ENCODE measurements at regions of chr11 and their contacts with region 1.

Region 1: DNA sequence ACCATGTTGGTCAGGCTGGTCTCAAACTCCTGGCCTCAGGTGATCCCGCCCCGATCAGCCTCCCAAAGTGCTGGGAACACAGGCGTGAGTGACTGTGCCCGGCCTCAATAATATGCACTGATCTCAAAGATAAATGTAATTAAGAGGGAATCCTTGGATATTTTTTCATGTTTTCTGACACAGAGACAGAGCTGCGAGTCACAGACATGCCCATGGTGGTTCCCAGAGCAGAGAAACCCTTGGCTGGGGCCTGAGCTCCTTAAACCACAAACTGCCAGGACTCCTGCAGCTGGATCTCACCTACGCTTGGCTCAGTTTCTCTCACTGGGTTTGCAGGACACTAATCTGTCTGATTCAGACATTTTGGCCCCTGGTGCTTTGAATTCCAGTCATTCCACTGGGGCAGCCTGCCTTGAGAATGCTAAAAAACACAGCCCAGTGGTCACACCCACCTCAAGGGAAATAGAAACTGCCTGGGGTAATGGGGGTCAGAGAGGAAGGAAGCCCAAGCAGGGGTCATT is 122.6 kb downstream of the CCDC81 start:
- DNase-seq: peak; percentile 81 to 96
- H3K4me3 ChIP-seq: no peak overlapping the region
- H3K27ac ChIP-seq: peak overlapping the region; percentile 91
- H3K4me1 ChIP-seq: peaks cover 55% of the 10 kb centered on the region
- H3K27me3 ChIP-seq: no peaks in the 10 kb centered on the region
- CTCF ChIP-seq: no peak

Region 2: DNA sequence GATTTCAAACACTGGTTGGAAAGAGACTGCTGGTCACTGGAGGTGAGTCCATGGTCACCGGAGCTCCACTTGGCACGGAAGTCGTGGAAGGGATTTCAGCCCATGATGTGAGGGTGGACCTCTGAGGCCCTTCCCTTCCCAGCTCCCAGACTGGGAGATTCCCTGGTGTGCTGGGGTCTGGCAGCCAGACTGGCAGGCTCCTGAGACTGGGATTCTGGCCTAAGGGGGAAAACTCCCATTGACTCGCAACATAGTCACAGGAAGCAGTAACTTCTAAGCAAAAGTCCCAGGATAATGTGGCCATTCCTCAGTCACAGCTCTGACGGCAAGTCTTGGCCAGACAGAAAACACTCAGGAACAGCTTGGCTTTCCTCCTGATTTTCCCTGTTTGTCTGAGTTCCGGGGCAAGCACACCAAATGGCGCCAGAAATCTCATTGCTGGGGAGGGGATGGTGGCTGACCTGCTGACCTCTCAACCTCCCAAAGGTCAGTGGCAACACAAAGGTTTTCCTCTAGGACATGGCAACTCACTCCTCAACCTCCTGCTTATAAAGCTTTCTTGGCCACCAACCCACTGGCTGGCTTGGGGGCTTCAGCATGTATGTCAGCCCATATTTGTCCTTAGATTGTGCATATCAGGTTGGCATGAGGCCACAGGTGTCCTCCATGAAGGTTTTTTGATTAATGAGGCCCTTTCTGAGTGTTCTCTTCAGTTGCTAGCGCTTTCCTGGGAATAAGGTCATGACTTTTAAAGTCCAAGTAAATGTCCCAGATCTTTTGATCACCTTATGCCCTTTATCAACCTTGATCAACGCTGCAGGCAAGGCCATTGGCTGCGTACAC is 23.0 kb before region 1 on chr11:
- CTCF ChIA-PET with region 1: no interaction called
- POLR2A ChIA-PET with region 1: interaction called, 3 read pairs
- intact Hi-C with region 1: loop called (anchors 1 kb)
- DNase-seq: no peak
- H3K4me3 ChIP-seq: no peak overlapping the region
- H3K27ac ChIP-seq: peak overlapping the region; percentile 43
- H3K4me1 ChIP-seq: peaks cover 25% of the 10 kb centered on the region
- H3K27me3 ChIP-seq: no peaks in the 10 kb centered on the region
- CTCF ChIP-seq: no peak

Region 3: DNA sequence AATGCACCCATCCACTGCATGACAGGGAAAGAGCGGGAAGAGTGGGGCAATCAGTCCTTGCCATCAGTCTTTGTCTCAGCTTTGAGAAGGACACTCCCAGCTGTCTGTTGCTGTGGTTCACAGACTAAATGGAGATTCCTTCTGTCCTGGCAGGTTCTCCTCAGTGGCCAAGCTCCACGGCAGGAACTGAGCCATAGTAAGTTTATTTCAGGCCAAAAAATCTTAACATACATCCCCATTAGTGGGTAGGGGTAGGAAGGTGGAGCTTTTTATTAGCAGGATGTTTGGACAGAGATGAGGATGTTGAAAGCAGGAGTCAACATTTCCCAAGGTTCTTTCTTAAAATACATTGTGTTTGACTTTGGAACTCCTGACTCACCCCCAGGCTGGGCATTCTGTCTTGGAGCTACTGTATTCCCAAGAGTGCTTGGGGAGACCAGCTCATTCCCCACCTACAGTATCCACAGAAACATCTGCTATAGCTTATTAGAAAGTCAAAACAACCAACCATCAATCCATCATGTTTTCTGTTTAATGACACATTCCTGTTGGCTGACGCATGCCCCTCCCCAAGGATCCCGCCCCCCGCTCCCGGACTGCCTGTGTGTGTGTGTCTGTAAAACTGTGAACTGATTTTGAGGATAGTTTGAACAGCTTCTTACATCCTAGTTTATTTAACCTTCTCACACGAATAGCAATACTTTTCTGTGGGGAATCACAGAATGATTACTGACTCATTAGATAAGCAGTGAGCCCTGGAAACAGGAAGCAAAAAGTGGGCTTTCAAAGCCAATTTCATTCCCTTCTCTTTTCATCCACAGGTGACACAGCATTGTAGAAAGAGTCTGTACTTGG is 13.1 kb before region 1 on chr11:
- CTCF ChIA-PET with region 1: interaction called, 4 read pairs
- POLR2A ChIA-PET with region 1: interaction called, 21 read pairs
- intact Hi-C with region 1: loop called (anchors 1 kb)
- DNase-seq: peak; percentile 87 to 100
- H3K4me3 ChIP-seq: peak overlapping the region; percentile 4; the same call in 1 of the 2 replicates
- H3K27ac ChIP-seq: peak overlapping the region; percentile 97
- H3K4me1 ChIP-seq: peaks cover 50% of the 10 kb centered on the region
- H3K27me3 ChIP-seq: no peaks in the 10 kb centered on the region
- CTCF ChIP-seq: no peak

Region 4: DNA sequence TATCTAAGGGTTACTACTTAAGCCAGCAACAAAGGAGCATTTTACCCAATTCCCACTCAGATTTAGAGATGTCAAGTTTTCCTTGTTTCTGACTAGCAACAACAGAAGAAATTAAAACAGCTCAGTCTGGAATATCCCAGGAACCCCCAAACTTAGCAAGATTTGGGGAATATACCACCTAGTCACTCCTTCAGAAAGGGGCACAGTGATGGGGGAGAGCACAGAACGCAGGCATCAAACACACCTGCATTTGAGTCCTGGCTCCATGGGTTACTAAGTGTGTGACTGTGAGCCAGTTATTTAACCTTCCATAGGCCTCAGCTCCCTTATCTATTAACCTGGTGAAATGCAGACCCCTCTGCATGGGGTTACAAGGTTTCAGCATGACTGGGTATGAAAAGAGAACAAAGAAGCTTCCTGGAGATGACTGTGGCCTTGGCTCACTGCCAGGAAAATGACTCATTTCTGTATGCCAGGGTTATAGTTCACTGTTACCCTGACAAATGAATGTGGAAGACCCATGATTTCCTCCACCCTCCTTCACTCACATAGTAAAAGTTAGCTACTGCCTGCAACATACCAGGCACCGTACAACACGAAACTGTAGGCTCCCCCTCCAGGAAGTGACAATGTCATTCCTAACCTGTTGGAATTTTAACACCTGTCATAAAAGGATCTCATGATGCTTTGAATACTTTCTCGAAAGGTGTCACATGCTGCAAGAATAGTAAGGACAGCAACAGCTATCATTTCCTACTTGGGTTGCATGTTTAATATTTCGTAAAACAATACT is 95.6 kb after region 1 on chr11:
- CTCF ChIA-PET with region 1: interaction called, 3 read pairs
- POLR2A ChIA-PET with region 1: no interaction called
- intact Hi-C with region 1: loop called (anchors 1 kb)
- DNase-seq: peak; percentile 91 to 100
- H3K4me3 ChIP-seq: no peak overlapping the region
- H3K27ac ChIP-seq: peak overlapping the region; percentile 97
- H3K4me1 ChIP-seq: peaks cover 66% of the 10 kb centered on the region
- H3K27me3 ChIP-seq: no peaks in the 10 kb centered on the region
- CTCF ChIP-seq: no peak

Region 5: GRCh38 chr11:86608251-86608799 is 111.1 kb after region 1 on chr11:
- CTCF ChIA-PET with region 1: no interaction called
- POLR2A ChIA-PET with region 1: interaction called, 5 read pairs
- intact Hi-C with region 1: loop called (anchors 1 kb)
- DNase-seq: peak; percentile 72 to 73
- H3K4me3 ChIP-seq: no peak overlapping the region
- H3K27ac ChIP-seq: no peak overlapping the region
- H3K4me1 ChIP-seq: peaks cover 22% of the 10 kb centered on the region
- H3K27me3 ChIP-seq: no peaks in the 10 kb centered on the region
- CTCF ChIP-seq: peak; percentile 96

Region 6: GRCh38 chr11:86623041-86623621 is 125.9 kb after region 1 on chr11:
- CTCF ChIA-PET with region 1: no interaction called
- POLR2A ChIA-PET with region 1: no interaction called
- intact Hi-C with region 1: loop called (anchors 1 kb)
- DNase-seq: peak; percentile 23 to 73
- H3K4me3 ChIP-seq: no peak overlapping the region
- H3K27ac ChIP-seq: no peak overlapping the region
- H3K4me1 ChIP-seq: no peaks in the 10 kb centered on the region
- H3K27me3 ChIP-seq: no peaks in the 10 kb centered on the region
- CTCF ChIP-seq: no peak

Region 7: DNA sequence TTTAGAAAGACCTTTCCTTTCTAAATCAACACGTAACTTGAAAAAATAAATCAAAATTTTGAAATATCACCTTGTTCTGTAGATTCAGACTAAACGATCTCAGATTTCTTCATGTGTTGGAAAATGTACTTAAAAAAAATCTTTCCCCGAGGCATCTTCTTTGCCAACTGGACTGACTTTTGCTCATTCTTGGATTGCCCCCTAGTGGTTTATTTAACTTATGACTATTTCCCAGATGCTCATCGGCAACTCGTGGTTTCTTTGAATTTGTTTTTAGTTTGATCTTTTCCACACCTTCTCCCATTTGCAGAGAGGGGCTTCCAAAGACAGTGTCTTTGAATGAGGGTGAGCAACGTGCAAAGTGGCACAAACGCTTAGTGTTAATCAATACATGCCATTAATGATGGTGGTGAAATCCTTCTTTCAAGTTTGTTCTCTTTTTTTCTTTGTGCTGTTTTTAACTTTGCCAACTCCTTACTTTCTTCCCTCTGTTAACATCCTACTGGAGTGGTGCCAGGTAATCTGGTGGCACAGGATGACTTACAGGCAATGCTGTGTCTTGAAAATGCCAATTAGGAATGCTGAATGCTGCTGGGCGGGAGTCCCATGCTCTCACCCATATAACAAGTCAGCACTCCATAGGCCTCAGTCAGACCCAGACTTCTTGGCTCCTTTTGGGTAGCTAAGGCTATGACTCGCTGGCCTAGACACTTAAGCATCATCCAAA is 321.4 kb after region 1 on chr11:
- CTCF ChIA-PET with region 1: no interaction called
- POLR2A ChIA-PET with region 1: no interaction called
- intact Hi-C with region 1: loop called (anchors 1 kb)
- DNase-seq: peak in 1 of 2 experiments; percentile 77
- H3K4me3 ChIP-seq: no peak overlapping the region
- H3K27ac ChIP-seq: no peak overlapping the region
- H3K4me1 ChIP-seq: peaks cover 20% of the 10 kb centered on the region
- H3K27me3 ChIP-seq: no peaks in the 10 kb centered on the region
- CTCF ChIP-seq: peak; percentile 94